ENCODE measurements at regions of chr7 and their contacts with region 1.

Region 1: DNA sequence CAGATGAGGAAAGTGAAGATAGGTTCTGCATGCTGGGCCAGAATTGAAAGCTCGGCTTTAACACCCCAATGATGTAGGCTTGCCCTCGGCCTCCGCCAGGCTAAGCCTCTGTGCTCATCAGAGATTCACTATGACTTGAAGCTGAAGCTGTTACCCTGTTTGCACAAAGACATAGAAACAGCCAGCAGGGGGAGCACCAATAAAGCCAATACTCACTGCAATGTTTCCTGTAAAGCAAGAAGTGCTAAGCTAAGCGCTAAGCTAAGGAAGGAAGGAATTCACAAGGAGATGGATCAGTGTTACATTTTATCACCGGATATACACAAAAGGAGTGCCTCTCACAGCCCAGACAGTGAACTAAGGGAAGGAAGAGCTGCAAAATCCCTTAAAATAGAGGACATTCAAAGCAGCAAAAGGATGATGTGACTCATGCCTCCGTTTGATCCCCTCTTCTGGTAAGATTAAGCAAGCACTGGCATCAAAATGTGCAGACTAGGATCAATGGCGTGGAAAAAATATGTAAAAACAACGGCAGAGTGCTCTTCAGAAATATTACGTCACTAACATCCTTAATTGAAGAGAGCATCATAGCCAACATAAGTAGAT is 153.8 kb downstream of the COBL start:
- DNase-seq: peak; percentile 88
- ATAC-seq: peak; percentile 98
- H3K4me3 ChIP-seq: no peak overlapping the region
- H3K27ac ChIP-seq: no peak overlapping the region
- H3K4me1 ChIP-seq: no peaks in the 10 kb centered on the region
- H3K27me3 ChIP-seq: peaks cover 3% of the 10 kb centered on the region
- CTCF ChIP-seq: peak; percentile 89

Region 2: DNA sequence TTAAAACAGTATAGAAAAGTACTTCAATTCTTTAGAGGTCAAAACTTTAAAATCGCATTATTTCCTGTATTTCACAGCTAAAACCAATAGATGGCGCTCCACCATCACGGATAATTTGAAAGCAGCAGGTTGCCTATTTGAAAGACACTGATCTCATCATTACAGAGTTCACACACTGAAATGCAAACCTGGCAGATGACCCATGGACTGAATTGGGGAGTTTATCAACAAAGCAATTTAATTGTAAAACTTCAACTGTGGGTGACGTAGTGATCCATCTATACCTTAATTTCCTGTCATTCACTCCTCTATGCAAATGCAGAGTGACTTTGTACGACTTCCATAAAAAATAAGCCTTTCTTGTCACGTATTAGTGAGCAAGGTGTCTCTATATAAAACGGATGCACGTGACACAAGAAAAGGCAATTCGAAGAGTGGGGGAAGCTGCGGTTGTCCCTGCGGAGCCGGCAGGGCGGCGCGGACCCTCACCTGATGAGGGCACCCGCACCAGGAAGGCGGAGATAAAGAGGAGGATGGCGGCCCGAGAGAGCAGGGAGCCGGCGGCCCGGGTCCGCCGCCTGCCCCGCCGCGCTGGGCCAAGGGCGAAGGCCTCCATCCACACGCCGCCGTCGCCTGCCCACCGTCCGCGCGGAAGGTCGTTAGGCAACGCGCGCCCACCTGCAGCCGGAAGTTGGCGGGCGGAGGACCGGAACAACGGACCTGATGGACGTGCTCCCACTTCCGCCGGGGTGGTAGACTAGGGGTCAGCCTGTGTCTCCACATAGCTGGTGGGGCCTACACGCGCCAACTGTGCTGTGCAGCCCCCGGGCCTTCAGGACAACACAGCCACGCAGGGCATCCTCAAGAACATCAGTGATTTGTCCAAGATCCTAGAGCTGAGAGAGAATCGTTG is 1070.0 kb before region 1 on chr7 and contains the start of gene ZPBP:
- CTCF ChIA-PET with region 1: interaction called, 7 read pairs
- POLR2A ChIA-PET with region 1: no interaction called
- in situ Hi-C with region 1: no loop called
- intact Hi-C with region 1: loop called (anchors 5 kb)
- DNase-seq: peak; percentile 41
- ATAC-seq: no peak; the same call in 1 of the 2 replicates
- H3K4me3 ChIP-seq: no peak within 1 kb of the TSS
- H3K27ac ChIP-seq: no peak within 1 kb of the TSS
- H3K4me1 ChIP-seq: no peaks in the 10 kb centered on the region
- H3K27me3 ChIP-seq: peaks cover 13% of the 10 kb centered on the region
- CTCF ChIP-seq: peak; percentile 84
- total RNA-seq, gene ZPBP: not detected

Region 3: GRCh38 chr7:50142425-50143017 is 1020.3 kb before region 1 on chr7:
- CTCF ChIA-PET with region 1: no interaction called
- POLR2A ChIA-PET with region 1: no interaction called
- in situ Hi-C with region 1: no loop called
- intact Hi-C with region 1: loop called (anchors 5 kb)
- DNase-seq: no peak
- ATAC-seq: no peak; the same call in 1 of the 2 replicates
- H3K4me3 ChIP-seq: no peak overlapping the region
- H3K27ac ChIP-seq: no peak overlapping the region
- H3K4me1 ChIP-seq: no peaks in the 10 kb centered on the region
- H3K27me3 ChIP-seq: 0 out of 2 replicates have a peak, but pooled peaks cover 2% of the 10 kb centered on the region
- CTCF ChIP-seq: peak; percentile 82; the same call in 1 of the 2 replicates

Region 4: GRCh38 chr7:50467817-50468610 is 694.8 kb before region 1 on chr7:
- CTCF ChIA-PET with region 1: interaction called, 5 read pairs
- POLR2A ChIA-PET with region 1: no interaction called
- in situ Hi-C with region 1: no loop called
- intact Hi-C with region 1: loop called (anchors 2 kb)
- DNase-seq: peak; percentile 58
- ATAC-seq: peak; percentile 94
- H3K4me3 ChIP-seq: peak overlapping the region in 1 of 2 experiments; percentile 43; a peak in 2 of 4 replicates
- H3K27ac ChIP-seq: no peak overlapping the region
- H3K4me1 ChIP-seq: no peaks in the 10 kb centered on the region
- H3K27me3 ChIP-seq: no peaks in the 10 kb centered on the region
- CTCF ChIP-seq: peak; percentile 97

Region 5: DNA sequence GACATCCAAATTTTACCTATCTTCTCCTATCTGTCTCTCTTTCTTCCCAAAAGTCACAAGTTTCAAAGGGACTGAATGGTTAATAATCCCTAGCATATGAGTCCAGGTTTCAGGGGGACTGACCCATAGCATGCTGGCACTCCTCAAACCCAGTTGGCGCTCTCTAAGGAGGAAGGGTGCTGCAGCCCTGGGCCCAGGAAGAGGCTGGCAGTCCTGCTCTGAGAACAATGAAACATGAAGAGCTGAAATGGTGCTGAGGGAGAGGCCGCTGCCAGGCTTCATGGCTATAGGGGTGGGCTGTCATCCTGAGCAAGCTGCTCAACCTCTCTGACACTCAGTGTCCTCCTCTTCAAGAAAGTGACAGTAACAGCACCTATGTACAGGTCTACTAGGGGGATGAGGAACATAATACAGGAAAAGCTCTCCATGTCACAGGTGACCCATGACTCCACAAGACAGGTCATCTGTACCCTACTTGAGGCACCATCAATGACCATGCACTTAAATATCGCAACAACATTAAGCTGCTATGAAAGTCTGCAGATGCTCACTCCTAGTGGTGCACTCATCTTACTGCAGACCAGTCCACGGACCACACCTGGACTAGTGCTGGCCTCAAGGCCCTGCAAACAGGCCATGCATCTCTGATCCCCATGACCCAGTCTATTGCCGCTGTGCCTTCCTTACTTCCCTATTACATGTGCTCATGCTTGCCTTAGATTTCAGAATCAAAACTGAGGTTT is 136.7 kb after region 1 on chr7:
- CTCF ChIA-PET with region 1: no interaction called
- POLR2A ChIA-PET with region 1: no interaction called
- in situ Hi-C with region 1: no loop called
- intact Hi-C with region 1: loop called (anchors 5 kb)
- DNase-seq: no peak
- ATAC-seq: no peak; the same call in 1 of the 2 replicates
- H3K4me3 ChIP-seq: no peak overlapping the region
- H3K27ac ChIP-seq: no peak overlapping the region
- H3K4me1 ChIP-seq: no peaks in the 10 kb centered on the region
- H3K27me3 ChIP-seq: no peaks in the 10 kb centered on the region; the same call in 1 of the 2 replicates
- CTCF ChIP-seq: no peak

Region 6: GRCh38 chr7:51366930-51367613 is 204.2 kb after region 1 on chr7:
- CTCF ChIA-PET with region 1: interaction called, 35 read pairs
- POLR2A ChIA-PET with region 1: no interaction called
- in situ Hi-C with region 1: no loop called
- intact Hi-C with region 1: loop called (anchors 1 kb)
- DNase-seq: no peak
- ATAC-seq: peak; percentile 94
- H3K4me3 ChIP-seq: no peak overlapping the region
- H3K27ac ChIP-seq: no peak overlapping the region
- H3K4me1 ChIP-seq: no peaks in the 10 kb centered on the region
- H3K27me3 ChIP-seq: no peaks in the 10 kb centered on the region; the same call in 1 of the 2 replicates
- CTCF ChIP-seq: peak; percentile 89

Region 7: DNA sequence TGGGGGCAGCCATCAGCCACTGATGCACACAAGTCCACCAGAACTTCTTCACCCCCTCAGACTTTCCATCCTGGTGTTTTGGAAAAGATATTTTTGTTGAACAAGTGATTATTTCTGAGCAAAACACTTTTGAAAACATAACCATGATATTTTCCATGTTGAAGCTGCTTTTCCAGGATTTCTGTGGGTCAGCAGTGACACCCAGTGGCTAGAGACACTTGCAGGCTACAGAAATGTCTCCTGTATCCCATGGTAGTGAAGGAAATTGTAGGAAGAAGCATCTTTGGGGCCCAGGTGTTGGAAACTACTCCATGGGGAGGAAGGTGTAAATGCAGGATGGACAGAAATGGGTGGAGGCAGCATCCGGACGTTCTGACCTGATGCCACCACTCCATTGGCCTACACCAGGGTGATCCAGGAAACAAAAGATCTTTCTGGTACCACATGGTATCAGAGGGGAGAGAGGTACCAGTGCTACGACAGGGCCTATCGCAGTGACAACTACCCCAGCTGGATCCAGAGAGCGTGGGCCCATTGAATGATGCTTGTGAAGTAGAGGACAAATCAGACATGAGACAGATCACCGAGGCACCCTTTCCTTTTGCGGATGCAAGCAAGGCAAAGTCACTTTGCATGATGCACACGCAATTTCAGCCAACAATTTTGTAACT is 265.5 kb after region 1 on chr7:
- CTCF ChIA-PET with region 1: interaction called, 6 read pairs
- POLR2A ChIA-PET with region 1: no interaction called
- in situ Hi-C with region 1: no loop called
- intact Hi-C with region 1: loop called (anchors 2 kb)
- DNase-seq: no peak
- ATAC-seq: peak; percentile 68
- H3K4me3 ChIP-seq: no peak overlapping the region
- H3K27ac ChIP-seq: no peak overlapping the region
- H3K4me1 ChIP-seq: no peaks in the 10 kb centered on the region; the same call in 1 of the 2 replicates
- H3K27me3 ChIP-seq: no peaks in the 10 kb centered on the region
- CTCF ChIP-seq: peak; percentile 76

Measured in Panc1 (cell line).